Astrocyte of the cerebellum (primary cell): ENCODE measurements at regions of chr11 and their contacts with region 1.

Region 1: GRCh38 chr11:15199693-15200092 is 85.0 kb downstream of the INSC start:
- DNase-seq: no peak
- H3K4me3 ChIP-seq: no peak overlapping the region
- CTCF ChIP-seq: no peak

Region 2: DNA sequence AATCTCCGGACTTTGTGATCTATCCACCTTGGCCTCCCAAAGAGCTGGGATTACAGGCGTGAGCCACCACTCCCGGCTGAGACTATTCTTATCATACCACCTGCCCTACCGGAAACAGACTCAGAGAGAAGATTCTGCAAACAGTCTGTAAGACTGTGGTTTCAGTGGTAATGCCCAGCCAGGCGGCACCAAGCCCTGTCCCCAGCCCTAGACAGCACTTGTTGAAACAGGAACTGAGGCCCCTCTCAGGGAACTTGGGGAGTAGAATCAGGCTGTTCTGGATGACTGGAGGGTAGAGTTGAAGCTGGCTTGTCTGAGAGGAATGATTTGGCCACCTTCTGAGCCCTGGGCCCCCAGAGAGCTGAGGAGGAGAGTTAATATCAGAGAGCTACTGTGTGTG is 86.3 kb before region 1 on chr11:
- in situ Hi-C with region 1: loop called (anchors 5 kb)
- DNase-seq: no peak
- H3K4me3 ChIP-seq: no peak overlapping the region
- CTCF ChIP-seq: no peak